KBM-7 (cell line): ENCODE measurements at regions of chr9 and their contacts with region 1.

Region 1: DNA sequence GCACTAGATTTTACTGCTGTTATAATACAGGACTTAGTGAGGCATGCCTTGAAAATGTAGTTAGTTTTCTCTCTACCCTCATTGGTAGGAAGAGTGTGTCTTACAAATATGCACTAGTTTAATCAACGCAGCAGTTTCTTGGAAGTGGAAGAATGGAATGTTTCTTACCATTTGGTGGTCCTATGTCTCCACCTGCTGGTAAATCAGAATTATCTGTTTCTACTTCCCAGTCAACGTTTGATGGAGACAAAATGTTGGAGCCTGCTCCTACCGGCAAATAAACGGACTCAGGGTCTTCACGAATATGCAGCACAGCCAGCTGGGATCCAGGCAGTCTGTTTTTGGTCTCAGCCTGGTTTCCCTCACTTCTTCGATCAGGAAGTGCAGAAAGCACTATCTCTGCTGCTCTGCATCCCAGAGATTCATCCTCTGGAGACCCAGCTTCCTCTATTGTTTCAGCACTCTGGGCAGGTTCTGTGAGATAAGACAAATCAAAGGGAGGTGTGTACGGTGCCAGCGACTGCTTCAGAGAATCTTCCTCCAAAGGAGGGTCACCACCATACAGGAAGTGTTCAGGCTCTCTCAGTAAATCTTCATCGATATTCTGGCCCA is 59.5 kb upstream of the PCA3 start:
- DNase-seq: peak; percentile 67

Region 2: GRCh38 chr9:75890472-75891276 is 814.0 kb before region 1 on chr9 and contains the start of gene PCSK5:
- in situ Hi-C with region 1: loop called (anchors 25 kb)
- DNase-seq: peak; percentile 86

Region 3: DNA sequence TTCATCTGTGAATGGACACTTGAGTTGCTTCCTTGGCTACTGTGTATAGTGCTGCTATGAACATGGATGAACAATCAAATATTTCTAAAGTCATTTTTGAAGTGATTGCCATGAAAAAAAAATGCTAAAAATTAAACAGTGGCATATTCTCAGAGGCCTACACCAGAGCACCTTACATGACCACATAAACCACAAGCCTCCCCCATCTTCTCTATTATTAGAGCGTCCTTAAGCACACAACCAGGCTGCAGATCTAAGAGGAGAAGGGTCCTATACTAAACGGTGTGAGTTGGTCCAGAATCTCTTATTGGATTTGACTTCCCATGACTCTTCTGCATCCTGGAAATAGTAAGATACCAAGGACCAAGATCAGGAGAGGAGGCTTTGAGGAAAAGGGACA is 93.8 kb after region 1 on chr9:
- in situ Hi-C with region 1: no loop called
- DNase-seq: peak; percentile 21

Region 4: DNA sequence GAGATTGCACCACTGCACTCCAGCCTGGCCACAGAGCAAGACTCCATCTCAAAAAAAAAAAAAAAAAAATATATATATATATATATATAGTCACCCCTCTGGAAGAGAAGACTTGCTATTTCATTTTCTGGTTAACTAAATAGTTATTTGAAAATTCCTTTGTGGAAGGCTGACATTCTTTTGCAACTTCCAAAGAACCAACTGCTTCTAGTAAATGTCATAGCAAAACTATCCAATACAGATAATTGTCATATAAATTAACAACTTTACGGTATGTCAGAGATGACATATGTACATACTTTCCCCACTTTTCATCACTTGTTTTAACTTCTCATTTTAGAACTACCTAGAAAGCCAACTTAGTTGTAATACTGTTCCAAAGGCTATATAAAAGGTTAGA is 150.3 kb after region 1 on chr9:
- in situ Hi-C with region 1: no loop called
- DNase-seq: no peak